ENCODE measurements at regions of chr1 and their contacts with region 1.

Region 1: DNA sequence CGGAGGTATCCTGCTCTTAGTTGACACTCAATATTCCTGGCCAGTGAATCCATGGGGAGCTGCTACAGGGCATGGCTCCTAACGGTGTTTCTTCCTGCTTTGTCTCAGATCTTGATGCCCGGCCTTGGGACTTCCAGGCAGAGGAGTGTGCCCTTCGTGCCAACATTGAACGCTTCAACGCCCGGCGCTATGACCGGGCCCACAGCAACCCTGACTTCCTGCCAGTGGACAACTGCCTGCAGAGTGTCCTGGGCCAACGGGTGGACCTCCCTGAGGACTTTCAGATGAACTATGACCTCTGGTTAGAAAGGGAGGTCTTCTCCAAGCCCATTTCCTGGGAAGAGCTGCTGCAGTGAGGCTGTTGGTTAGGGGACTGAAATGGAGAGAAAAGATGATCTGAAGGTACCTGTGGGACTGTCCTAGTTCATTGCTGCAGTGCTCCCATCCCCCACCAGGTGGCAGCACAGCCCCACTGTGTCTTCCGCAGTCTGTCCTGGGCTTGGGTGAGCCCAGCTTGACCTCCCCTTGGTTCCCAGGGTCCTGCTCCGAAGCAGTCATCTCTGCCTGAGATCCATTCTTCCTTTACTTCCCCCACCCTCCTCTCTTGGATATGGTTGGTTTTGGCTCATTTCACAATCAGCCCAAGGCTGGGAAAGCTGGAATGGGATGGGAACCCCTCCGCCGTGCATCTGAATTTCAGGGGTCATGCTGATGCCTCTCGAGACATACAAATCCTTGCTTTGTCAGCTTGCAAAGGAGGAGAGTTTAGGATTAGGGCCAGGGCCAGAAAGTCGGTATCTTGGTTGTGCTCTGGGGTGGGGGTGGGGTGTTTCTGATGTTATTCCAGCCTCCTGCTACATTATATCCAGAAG is 16.7 kb downstream of the ALX3 start:
- DNase-seq: peak in 1 of 2 donors; percentile 80
- ATAC-seq: peak; percentile 30

Region 2: GRCh38 chr1:110106013-110106941 is 52.5 kb after region 1 on chr1:
- intact Hi-C with region 1: loop called (anchors 5 to 10 kb)
- DNase-seq: peak; percentile 48 to 63
- ATAC-seq: peak; percentile 93

Measured in left colon (tissue), 2 donors.